Heart right ventricle (tissue), 16 donors: ENCODE measurements at regions of chr9 and their contacts with region 1.

Region 1: DNA sequence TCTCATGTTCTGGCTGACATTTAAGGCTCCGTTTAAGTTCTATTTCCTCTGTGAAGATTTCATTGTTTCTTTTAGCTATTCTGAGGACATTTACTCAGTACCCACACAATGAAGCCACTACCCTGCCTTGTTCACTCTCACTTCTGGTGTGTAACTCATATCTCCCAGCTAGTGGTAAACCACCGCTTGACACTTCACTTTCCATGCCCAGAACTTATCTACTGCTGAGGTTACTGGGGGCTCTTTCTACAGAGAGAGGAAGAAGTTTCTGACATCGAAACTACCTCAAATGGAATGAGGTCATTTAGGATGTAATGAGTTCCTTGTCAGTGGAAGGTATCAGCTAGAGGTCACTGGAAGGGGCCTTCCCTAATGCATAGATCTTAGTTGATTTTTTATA is 501.5 kb downstream of the DMAC1 start:
- DNase-seq: no peak
- ATAC-seq: no peak
- H3K4me3 ChIP-seq: no peak overlapping the region
- H3K27ac ChIP-seq: no peak overlapping the region
- H3K4me1 ChIP-seq: no peaks in the 10 kb centered on the region
- H3K27me3 ChIP-seq: no peaks in the 10 kb centered on the region
- CTCF ChIP-seq: no peak

Region 2: DNA sequence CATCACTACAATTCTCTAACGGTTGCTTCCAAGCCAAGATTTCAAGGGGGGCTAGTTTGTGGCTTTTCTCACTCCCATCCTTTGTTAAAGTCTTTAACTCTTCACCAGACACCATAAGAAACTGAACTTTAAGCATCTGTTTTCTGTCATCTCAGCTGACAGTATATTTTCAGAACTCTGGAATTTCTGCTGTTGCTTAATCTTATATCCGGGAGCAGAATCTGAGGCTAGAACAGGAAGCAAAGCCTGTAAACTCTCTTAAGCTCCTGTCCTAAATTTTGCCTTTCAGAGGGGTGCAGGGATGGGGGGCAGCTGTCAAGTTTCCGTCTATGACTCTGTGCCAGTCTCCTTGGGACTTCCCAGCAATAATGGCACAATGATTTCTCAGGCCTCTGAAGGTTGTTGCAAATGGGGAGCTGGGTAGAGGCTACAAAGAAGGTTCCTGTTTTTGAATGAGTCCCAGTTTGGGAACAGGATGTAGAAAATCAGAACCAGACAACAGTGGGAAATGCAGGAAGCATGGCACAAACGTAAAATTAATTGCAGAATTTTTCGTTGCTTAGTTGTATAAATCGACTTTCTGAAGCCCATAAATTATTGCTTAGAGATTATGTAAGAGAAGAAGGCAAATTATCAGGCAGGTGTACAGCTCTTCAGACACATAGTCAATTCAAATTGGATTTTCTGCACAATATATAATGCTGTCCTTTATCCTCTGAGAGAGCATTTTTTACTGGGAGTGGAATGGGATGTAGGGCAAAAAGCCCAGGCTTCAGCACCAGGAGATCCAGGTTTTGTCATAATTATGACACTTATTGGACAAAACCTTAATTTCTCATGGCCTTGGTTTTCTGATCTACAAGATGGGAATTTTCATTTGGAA is 70.5 kb after region 1 on chr9:
- intact Hi-C with region 1: loop called in 1 of 10 experiments (anchors 10 kb)
- DNase-seq: peak in 1 of 2 donors; percentile 17
- ATAC-seq: peak; percentile 55 to 79 (median 70)
- H3K4me3 ChIP-seq: no peak overlapping the region
- H3K27ac ChIP-seq: peak overlapping the region in 9 of 10 donors; percentile 23 to 77 (median 54)
- H3K4me1 ChIP-seq: peaks cover 10 to 50% (median 40%) of the 10 kb centered on the region in 9 donors
- H3K27me3 ChIP-seq: no peaks in the 10 kb centered on the region
- CTCF ChIP-seq: no peak